ENCODE measurements at regions of chr3 and their contacts with region 1.

Region 1: GRCh38 chr3:172039436-172040077 is at the start of gene FNDC3B:
- H3K4me3 Mint-ChIP-seq: peak within 1 kb of the TSS; percentile 85
- H3K27ac Mint-ChIP-seq: peak within 1 kb of the TSS; percentile 93
- H3K4me1 Mint-ChIP-seq: peaks cover 51% of the 10 kb centered on the region
- H3K27me3 Mint-ChIP-seq: no peaks in the 10 kb centered on the region

Region 2: DNA sequence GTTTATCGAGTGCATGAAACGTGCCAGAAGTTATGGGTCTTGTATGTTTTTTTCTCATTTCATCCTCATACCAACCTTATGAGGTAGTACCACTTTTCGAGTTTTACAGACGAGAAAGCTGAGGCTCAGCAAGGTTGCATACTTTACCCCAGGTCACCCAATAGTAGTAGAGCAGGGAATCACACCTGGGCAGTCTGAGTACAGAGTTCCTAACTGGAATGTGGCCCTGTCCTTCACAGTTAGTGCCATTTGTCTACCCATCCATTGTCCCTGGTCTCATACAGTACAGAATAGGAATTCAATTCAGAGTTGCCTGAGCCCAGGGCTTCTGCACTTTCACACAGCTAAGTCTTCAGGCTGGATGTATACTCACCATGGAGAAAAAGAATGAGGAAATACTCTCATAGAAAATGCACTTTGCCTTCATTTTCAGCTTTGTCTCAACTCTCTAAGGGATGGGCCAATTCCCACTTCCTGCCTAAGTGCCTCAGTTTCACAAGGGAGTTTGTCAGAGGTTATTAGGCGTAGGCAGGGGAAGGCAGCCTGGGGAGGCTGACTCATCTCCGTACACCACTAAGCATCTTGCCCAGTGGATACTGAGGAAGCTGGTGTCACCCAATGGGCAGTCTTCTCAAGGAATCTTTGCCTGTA is 103.2 kb before region 1 on chr3:
- intact Hi-C with region 1: loop called (anchors 5 kb)
- H3K4me3 Mint-ChIP-seq: peak overlapping the region; percentile 23
- H3K27ac Mint-ChIP-seq: peak overlapping the region; percentile 63
- H3K4me1 Mint-ChIP-seq: peaks cover 59% of the 10 kb centered on the region
- H3K27me3 Mint-ChIP-seq: no peaks in the 10 kb centered on the region

Region 3: GRCh38 chr3:172074586-172074985 is 35.0 kb after region 1 on chr3:
- intact Hi-C with region 1: loop called (anchors 5 kb)
- H3K4me3 Mint-ChIP-seq: no peak overlapping the region
- H3K27ac Mint-ChIP-seq: peak overlapping the region; percentile 55
- H3K4me1 Mint-ChIP-seq: peaks cover 54% of the 10 kb centered on the region
- H3K27me3 Mint-ChIP-seq: no peaks in the 10 kb centered on the region

Region 4: GRCh38 chr3:172106989-172107388 is 67.4 kb after region 1 on chr3:
- intact Hi-C with region 1: loop called (anchors 5 kb)
- H3K4me3 Mint-ChIP-seq: peak overlapping the region; percentile 68
- H3K27ac Mint-ChIP-seq: peak overlapping the region; percentile 90
- H3K4me1 Mint-ChIP-seq: peaks cover 64% of the 10 kb centered on the region
- H3K27me3 Mint-ChIP-seq: no peaks in the 10 kb centered on the region